Sigmoid colon (tissue), 7 donors: ENCODE measurements at regions of chrX and their contacts with region 1.

Region 1: DNA sequence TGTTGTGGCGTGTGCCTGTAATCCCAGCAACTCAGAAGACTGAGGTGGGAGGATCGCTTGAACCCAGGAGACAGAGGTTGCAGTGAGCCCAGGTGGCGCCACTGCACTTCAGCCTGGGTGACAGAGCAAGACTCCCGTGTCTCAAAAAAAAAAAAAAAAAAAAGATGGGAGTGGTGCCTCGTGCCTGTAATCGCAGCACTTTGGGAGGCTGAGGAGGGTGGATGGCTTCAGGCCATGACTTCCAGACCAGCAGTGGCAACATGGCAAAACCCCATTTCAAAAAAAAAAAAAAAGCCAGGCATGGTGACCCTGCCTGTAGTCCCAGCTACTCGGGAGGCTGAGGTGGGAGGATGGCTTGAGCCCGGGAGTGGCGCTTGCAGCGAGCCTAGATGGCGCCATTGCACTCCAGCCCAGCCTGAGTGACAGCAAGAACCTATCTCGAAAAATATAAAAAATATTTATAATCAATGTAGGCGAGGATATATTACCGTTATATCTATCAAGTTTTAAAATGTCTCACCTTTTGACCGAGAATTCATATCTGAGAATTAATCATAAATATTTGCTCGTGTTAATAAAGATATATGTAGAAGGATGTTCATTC is 27.0 kb downstream of the EIF2S3 start:
- DNase-seq: peak; percentile 77
- H3K4me3 ChIP-seq: no peak overlapping the region
- H3K27ac ChIP-seq: no peak overlapping the region
- H3K4me1 ChIP-seq: no peaks in the 10 kb centered on the region
- H3K27me3 ChIP-seq: no peaks in the 10 kb centered on the region
- CTCF ChIP-seq: peak in 2 of 4 experiments; percentile 9 to 15
- EP300 ChIP-seq: no peak
- POLR2A ChIP-seq: no peak

Region 2: GRCh38 chrX:24173115-24173847 is 91.5 kb after region 1 on chrX:
- intact Hi-C with region 1: no loop called
- DNase-seq: no peak
- H3K4me3 ChIP-seq: no peak overlapping the region
- H3K27ac ChIP-seq: no peak overlapping the region
- H3K4me1 ChIP-seq: peaks cover 0 to 42% (median 34%) of the 10 kb centered on the region in 4 donors
- H3K27me3 ChIP-seq: no peaks in the 10 kb centered on the region
- CTCF ChIP-seq: no peak
- EP300 ChIP-seq: no peak
- POLR2A ChIP-seq: no peak

Region 3: DNA sequence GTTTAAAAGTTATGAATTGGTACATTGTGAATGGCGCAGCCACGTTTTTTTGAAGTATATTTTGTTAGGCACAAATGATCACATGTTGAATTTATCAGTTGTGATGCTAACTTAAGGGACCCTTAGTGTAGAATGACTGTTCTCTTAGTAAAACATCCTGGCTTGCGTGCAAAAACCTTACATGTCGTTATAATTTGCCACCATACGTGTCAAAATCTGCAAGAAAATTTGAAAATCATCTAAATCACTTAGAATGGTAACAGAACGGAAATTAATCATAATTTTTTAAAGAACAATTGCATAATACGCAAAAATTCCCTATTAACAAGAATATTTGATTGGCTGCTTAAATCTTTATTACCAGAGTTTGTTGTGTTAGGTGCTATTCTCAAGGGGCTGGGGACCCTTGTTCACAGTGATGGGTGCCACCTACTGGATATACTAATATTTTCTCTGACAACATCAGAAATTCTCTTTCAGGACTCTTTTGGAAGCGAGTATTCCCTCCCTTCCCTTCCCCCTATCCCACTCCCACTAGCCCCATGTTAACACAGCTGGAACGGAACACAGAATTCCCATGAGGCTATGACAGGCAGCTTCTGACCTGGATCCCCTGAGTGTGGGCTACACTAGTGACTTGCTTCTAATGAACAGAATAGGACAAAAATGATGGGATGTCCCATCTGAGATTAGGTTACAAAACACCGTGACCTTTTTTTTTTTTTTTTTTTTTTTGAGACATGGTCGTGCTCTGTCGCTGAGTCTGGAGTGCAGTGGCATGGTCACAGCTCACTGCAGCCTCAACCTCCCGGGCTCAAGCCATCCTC is 160.3 kb after region 1 on chrX:
- intact Hi-C with region 1: loop called (anchors 5 kb)
- DNase-seq: no peak
- H3K4me3 ChIP-seq: no peak overlapping the region
- H3K27ac ChIP-seq: peak overlapping the region in 2 of 4 donors; percentile 9 to 10
- H3K4me1 ChIP-seq: no peaks in the 10 kb centered on the region
- H3K27me3 ChIP-seq: no peaks in the 10 kb centered on the region
- CTCF ChIP-seq: peak in 3 of 4 experiments; percentile 21 to 29 (median 21)
- EP300 ChIP-seq: no peak
- POLR2A ChIP-seq: no peak